ENCODE measurements at regions of chr7 and their contacts with region 1.

Region 1: DNA sequence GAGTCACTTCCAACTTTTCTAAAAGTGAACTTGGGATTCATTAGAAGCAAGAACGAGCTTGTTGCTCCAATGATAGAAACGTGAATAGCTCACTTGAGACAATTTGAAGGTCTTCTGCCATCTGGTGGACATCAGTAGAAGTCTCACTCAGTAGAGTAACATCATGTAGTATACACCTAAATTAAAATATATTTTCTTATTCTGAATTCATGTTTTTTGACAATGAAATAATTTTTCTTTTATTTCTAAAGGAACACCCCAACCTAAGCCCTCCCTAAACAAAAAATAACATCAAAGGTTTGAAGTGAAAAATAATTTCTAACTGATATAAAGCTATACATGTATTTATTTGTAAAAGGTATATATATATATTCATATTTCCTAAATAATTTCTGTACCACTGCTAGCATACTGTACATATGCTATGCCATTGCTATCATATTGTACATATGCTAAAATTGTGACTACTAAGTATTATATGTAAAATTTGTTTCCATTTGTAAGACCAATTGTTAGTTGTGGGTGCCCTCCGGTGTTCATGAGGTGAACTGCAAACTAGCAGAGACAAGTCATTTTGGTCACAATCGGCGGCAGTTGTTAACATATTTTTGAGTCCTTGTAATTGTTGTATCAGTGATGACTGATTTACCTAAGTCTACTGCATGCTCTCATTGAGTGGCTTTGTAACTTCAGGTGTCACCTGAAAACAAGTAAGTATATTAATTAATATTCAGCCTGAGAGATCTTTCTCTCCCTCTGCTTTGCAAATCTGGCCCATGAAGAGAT is 121.9 kb downstream of the PTPRZ1 start:
- DNase-seq: peak; percentile 73 to 87 (median 76)
- ATAC-seq: peak; percentile 97
- H3K4me3 ChIP-seq: no peak overlapping the region
- H3K27ac ChIP-seq: no peak overlapping the region
- H3K4me1 ChIP-seq: peaks cover 5% of the 10 kb centered on the region
- H3K27me3 ChIP-seq: no peaks in the 10 kb centered on the region
- CTCF ChIP-seq: peak; percentile 33 to 80 (median 73)
- POLR2A ChIP-seq: no peak

Region 2: GRCh38 chr7:121372376-121373010 is 622.3 kb before region 1 on chr7:
- intact Hi-C with region 1: loop called (anchors 10 kb)
- DNase-seq: no peak
- ATAC-seq: no peak
- H3K4me3 ChIP-seq: no peak overlapping the region
- H3K27ac ChIP-seq: no peak overlapping the region
- H3K4me1 ChIP-seq: peaks cover 15% of the 10 kb centered on the region
- H3K27me3 ChIP-seq: no peaks in the 10 kb centered on the region
- CTCF ChIP-seq: no peak
- POLR2A ChIP-seq: no peak

Region 3: DNA sequence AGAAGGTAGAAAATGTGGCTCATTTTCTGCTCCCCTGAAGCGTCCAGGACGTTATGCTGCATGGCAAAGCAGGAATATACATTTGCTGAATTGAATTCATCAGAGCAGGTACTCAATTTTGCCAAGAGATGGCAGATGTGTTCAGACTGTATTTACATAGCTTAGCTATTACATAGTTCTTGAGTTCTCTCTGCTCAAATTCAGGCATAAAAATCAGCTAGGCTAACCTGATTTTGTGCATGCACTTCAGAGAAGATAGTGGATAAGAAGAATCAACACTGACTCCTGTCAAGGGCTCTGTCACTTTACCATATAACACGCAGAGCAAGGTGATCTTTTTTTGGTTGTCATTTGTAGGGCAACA is 389.5 kb before region 1 on chr7:
- intact Hi-C with region 1: loop called (anchors 10 kb)
- DNase-seq: no peak
- ATAC-seq: peak; percentile 67
- H3K4me3 ChIP-seq: no peak overlapping the region
- H3K27ac ChIP-seq: peak overlapping the region; percentile 10 to 70 (median 62)
- H3K4me1 ChIP-seq: peaks cover 55% of the 10 kb centered on the region
- H3K27me3 ChIP-seq: no peaks in the 10 kb centered on the region
- CTCF ChIP-seq: peak in 4 of 7 experiments; percentile 43 to 56 (median 46)
- POLR2A ChIP-seq: no peak

Region 4: GRCh38 chr7:121824276-121824675 is 170.5 kb before region 1 on chr7:
- intact Hi-C with region 1: no loop called
- DNase-seq: no peak
- ATAC-seq: no peak
- H3K4me3 ChIP-seq: no peak overlapping the region
- H3K27ac ChIP-seq: no peak overlapping the region
- H3K4me1 ChIP-seq: no peaks in the 10 kb centered on the region
- H3K27me3 ChIP-seq: no peaks in the 10 kb centered on the region
- CTCF ChIP-seq: no peak
- POLR2A ChIP-seq: no peak

Measured in body of pancreas (tissue), 4 donors.